Prostate gland (tissue), 2 donors: ENCODE measurements at regions of chr9 and their contacts with region 1.

Region 1: GRCh38 chr9:69060766-69061165 is 25.2 kb downstream of the FXN start:
- DNase-seq: no peak
- H3K4me3 ChIP-seq: no peak overlapping the region
- H3K27ac ChIP-seq: no peak overlapping the region
- H3K4me1 ChIP-seq: no peaks in the 10 kb centered on the region
- H3K27me3 ChIP-seq: no peaks in the 10 kb centered on the region
- CTCF ChIP-seq: no peak
- POLR2A ChIP-seq: no peak

Region 2: DNA sequence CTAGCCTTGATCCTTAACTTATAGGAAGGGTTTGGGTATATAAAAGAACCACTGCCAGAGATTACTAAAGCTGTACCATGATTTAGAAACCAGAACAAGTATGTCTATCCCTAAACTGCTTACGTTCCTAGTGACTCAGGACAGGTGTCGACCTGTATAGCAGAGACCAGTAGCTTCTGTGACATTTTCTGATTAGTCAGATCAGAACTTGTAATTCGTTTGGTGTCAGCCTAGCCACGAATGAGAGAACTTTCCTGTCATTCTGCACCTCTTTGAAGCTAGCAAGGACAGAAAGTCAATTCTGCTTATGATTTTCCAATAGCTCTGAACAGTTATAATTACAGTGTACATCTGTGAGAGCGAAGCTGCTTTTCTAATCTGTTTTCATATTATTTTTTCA is 86.3 kb before region 1 on chr9:
- intact Hi-C with region 1: no loop called
- DNase-seq: no peak
- H3K4me3 ChIP-seq: no peak overlapping the region
- H3K27ac ChIP-seq: no peak overlapping the region
- H3K4me1 ChIP-seq: no peaks in the 10 kb centered on the region
- H3K27me3 ChIP-seq: no peaks in the 10 kb centered on the region
- CTCF ChIP-seq: no peak
- POLR2A ChIP-seq: no peak

Region 3: GRCh38 chr9:68999393-69000105 is 61.2 kb before region 1 on chr9:
- intact Hi-C with region 1: no loop called
- DNase-seq: peak; percentile 68
- H3K4me3 ChIP-seq: no peak overlapping the region
- H3K27ac ChIP-seq: no peak overlapping the region
- H3K4me1 ChIP-seq: no peaks in the 10 kb centered on the region
- H3K27me3 ChIP-seq: no peaks in the 10 kb centered on the region
- CTCF ChIP-seq: peak; percentile 42 to 79 (median 76)
- POLR2A ChIP-seq: no peak

Region 4: GRCh38 chr9:69149321-69149807 is 88.6 kb after region 1 on chr9:
- intact Hi-C with region 1: loop called (anchors 5 kb)
- DNase-seq: no peak
- H3K4me3 ChIP-seq: no peak overlapping the region
- H3K27ac ChIP-seq: peak overlapping the region in 1 of 2 donors; percentile 19
- H3K4me1 ChIP-seq: peaks cover 4% of the 10 kb centered on the region
- H3K27me3 ChIP-seq: no peaks in the 10 kb centered on the region
- CTCF ChIP-seq: peak in 1 of 4 experiments; percentile 37
- POLR2A ChIP-seq: no peak